ENCODE measurements at regions of chr14 and their contacts with region 1.

Region 1: GRCh38 chr14:94665121-94665520 is 52.9 kb downstream of the SERPINA3 start:
- DNase-seq: peak; percentile 12
- H3K4me3 ChIP-seq: no peak overlapping the region
- H3K27ac ChIP-seq: no peak overlapping the region
- H3K4me1 ChIP-seq: no peaks in the 10 kb centered on the region
- H3K27me3 ChIP-seq: no peaks in the 10 kb centered on the region
- CTCF ChIP-seq: no peak
- POLR2A ChIP-seq: no peak

Region 2: DNA sequence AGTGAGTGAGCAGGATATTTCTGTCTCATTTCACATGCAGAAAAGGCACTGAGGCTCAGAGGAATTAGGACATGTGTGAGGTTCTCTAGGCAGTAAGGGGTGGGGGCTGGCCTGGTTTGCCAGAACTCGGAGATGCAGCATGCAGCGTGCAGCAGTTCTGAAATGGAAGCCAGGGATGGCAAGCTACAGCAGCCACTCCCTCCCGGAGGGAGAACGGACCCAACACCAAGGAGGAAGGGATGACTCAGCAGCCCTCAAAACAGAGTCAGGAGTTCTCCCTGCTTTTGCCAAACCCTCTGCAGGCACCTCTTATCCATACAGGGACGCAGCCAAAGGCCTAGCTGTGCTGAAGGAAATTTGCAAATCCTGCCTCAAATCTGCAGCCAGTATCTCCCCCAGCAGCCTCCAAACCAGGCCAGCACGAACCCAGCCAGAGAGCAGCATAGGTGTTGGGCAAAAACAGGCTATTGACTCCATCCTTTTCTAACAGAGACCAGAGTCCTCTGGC is 63.2 kb before region 1 on chr14:
- CTCF ChIA-PET with region 1: no interaction called
- POLR2A ChIA-PET with region 1: no interaction called
- dilution Hi-C with region 1: no loop called
- intact Hi-C with region 1: loop called (anchors 1 kb)
- DNase-seq: peak; percentile 51
- H3K4me3 ChIP-seq: no peak overlapping the region
- H3K27ac ChIP-seq: peak overlapping the region; percentile 19
- H3K4me1 ChIP-seq: peaks cover 36% of the 10 kb centered on the region
- H3K27me3 ChIP-seq: no peaks in the 10 kb centered on the region
- CTCF ChIP-seq: no peak
- POLR2A ChIP-seq: no peak